HEK293 (cell line): ENCODE measurements at regions of chr9 and their contacts with region 1.

Region 1: DNA sequence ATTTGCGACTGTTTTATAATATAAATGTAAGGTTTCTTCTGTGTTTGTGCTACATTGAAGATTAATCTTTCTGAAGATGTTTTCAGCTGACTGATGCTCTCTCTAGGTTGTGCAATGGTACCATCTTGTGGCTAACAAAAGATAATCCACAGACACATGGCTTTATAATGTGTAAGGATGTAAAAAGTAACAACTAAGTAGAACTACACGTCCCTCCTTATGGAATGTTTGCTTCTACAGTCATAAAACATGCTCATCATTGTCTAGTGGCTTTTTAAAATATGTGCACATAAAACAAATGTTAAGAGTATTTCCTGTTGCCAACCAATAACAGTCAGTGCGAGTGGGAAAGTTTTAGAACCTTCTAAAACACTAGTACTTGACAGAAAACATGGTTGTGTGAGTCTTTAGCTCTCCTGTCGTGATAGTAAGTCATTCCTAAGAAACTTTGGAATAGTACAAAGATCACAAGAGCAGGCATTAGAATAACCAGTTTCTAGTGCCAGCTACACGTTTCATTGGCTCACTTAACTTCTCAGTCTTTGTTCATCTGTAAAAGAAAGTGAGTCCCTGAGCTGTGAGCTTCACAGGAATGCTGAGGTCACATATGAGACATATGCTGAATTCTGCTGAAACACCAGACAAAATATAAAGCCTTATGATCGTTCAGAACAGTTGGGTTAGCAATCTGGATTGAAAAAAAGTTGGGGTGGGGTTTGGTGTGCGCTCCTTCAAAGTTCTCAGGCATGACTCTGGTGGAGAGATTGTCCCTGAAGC is 75.7 kb upstream of the GLIS3 start:
- H3K4me3 ChIP-seq: no peak overlapping the region
- H3K27ac ChIP-seq: no peak overlapping the region
- H3K4me1 ChIP-seq: no peaks in the 10 kb centered on the region
- CTCF ChIP-seq: peak; percentile 38; the same call in 1 of the 2 replicates

Region 2: GRCh38 chr9:3732077-3733038 is 643.3 kb before region 1 on chr9:
- CTCF ChIA-PET with region 1: interaction called, 11 read pairs
- POLR2A ChIA-PET with region 1: no interaction called
- H3K4me3 ChIP-seq: no peak overlapping the region
- H3K27ac ChIP-seq: no peak overlapping the region
- H3K4me1 ChIP-seq: no peaks in the 10 kb centered on the region
- CTCF ChIP-seq: peak; percentile 28; the same call in 1 of the 2 replicates

Region 3: DNA sequence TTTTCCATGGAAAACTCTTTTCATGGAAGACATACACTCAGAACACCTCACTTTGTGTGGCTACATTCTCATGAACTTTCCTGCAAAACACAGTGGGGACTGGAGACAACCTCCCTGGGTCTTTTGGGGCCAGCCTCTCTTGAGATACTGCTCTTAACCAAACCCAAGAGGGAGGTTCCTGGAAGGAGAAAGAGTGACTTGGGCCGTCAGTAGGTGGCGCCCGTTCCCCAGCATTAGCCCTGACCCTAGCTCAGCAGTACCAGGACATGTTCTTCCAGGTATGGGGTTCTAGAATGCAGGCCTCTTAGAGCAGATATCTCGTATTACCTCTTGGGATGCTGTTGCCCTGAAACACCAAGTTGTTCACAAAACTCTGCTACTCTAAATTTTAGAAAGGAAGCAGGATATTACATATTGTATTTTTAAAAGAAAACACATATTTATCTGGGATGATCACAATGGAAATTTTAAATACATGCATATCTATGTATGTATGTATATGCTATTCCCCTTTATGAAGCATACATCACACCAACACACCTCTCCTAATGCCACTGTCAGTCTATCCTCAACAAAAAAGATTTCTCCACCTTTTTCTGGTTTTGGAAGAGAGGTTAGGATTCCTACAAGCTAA is 59.9 kb before region 1 on chr9:
- CTCF ChIA-PET with region 1: interaction called, 18 read pairs
- POLR2A ChIA-PET with region 1: no interaction called
- H3K4me3 ChIP-seq: no peak overlapping the region
- H3K27ac ChIP-seq: no peak overlapping the region
- H3K4me1 ChIP-seq: no peaks in the 10 kb centered on the region
- CTCF ChIP-seq: peak; percentile 54; the same call in 1 of the 2 replicates